Activated CD4-positive, alpha-beta T cell treated with anti-CD3 and anti-CD28 coated beads for 36 hours (primary cell): ENCODE measurements at regions of chr6 and their contacts with region 1.

Region 1: GRCh38 chr6:131172222-131172621 is 37.0 kb downstream of the AKAP7 start:
- DNase-seq: no peak
- ATAC-seq: no peak
- H3K4me3 Mint-ChIP-seq: no peak overlapping the region
- H3K27ac Mint-ChIP-seq: no peak overlapping the region
- H3K4me1 Mint-ChIP-seq: no peaks in the 10 kb centered on the region
- H3K27me3 Mint-ChIP-seq: no peaks in the 10 kb centered on the region

Region 2: DNA sequence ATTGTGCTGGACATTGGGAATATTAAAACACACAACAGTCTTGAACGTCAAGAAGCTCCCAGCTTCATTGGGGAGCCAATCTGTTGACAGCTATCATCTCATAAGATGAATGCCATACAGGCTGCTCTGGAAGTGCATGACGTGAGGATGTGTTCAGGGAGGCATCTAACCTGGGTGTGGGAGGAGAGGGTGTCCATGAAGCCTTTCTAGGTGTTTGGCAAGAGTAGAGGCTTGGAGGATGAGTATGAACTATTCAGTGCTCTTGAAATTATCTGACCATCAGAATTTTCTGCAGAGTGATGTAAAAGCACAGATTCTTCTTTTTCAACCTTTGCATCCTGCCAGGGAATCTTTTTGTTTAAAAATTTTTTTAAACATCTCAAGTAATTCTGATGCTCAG is 25.4 kb before region 1 on chr6:
- CTCF ChIA-PET with region 1: no interaction called
- POLR2A ChIA-PET with region 1: no interaction called
- intact Hi-C with region 1: loop called in 1 of 2 experiments (anchors 1 kb)
- DNase-seq: no peak
- ATAC-seq: no peak
- H3K4me3 Mint-ChIP-seq: no peak overlapping the region
- H3K27ac Mint-ChIP-seq: no peak overlapping the region
- H3K4me1 Mint-ChIP-seq: no peaks in the 10 kb centered on the region
- H3K27me3 Mint-ChIP-seq: no peaks in the 10 kb centered on the region